HepG2 (cell line): ENCODE measurements at regions of chr16 and their contacts with region 1.

Region 1: DNA sequence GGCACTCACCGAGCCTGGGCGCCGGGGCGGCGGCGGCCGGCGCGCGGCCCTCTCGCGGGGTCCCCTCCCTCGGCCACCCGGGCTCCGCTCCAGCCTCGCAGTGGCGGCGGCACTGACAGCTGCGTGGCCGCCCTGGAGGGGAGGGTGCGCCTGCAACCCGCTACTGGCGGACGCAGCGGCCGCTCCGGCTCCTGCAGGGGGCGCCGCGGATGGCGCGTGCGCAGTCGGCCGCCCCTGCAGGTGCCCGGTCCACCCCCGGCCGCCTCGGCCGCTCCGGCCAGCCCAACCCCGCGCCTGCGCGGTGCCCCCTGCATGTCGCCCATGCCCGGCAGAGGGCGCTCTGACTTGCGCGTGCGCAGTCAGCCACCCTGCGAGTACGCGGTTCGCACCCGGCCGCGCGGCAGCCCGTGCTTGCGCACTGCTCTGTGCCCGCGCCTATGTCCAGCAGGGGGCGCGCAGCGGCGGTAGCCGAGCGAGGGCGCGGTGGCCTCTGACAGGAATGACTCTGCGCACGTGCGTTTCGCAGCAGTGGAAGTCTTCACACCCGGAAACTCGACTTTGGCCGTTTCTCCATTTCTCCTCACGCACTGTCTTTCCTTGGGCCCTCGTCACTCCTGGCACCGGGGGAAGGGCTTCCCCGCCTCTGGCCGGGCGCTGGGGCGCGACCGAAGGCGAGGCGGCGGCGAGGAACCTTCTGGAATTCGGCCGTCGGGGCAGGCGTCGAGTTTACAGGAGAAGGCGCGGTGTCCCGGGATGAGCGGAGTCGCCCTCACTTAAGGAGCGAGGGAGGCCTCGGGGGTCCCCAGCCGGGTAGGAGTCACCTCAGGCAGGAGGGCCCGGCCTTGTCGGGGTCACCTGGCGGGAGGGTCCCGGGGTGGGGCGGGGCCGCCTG is at the start of gene ABCA3:
- DNase-seq: peak; percentile 84
- ATAC-seq: peak; percentile 90
- H3K4me3 ChIP-seq: peak within 1 kb of the TSS; percentile 43 to 78 (median 65)
- H3K27ac ChIP-seq: no peak within 1 kb of the TSS
- H3K4me1 ChIP-seq: peaks cover 11% of the 10 kb centered on the region
- H3K27me3 ChIP-seq: peaks cover 6 to 38% of the 10 kb centered on the region in 2 experiments
- CTCF ChIP-seq: peak; percentile 98
- EP300 ChIP-seq: peak in 1 of 2 experiments; percentile 51; a peak in 1 of 4 replicates
- POLR2A ChIP-seq: no peak
- RAD21 ChIP-seq: peak; percentile 95
- total RNA-seq, gene ABCA3: 0.41 and 0.60 TPM in 2 replicates

Region 2: DNA sequence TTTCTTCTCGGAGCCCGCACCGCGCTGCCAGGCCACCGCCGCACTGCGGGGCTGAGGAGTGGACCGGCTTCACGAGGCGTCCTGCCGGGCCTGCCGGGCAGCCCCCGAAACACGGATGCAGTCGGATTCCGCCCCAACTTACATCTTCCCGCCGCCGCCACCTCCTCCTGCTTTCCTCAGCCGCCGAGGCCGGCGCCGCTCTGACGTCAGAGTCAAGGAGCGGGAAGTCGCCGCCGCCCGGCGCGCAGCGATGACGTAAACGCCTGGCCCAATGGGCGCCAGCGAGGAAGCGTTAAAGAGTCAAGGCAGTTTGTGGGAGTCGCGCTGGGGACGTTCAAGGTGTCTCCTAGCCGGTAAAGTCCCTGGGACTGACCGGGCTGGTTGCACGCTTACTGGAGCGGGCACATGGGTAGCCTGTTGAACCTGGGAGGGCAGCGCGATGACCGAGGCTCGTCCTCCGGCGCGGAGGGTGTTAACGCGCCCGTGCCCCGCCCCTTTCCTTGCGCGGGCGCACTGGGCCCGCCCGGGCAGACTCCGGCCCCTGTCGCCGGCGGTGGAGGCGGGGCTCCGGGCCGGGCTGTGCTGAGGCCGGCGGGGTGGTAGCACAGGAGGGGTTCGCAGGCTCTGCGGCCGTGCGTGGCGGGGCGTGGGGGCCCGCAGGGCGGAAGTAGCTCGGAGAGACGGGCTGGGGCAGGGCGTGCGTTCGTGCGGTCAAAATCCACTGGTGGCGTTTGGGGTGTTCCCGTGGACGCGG is 72.7 kb before region 1 on chr16 and contains the start of gene RNPS1:
- CTCF ChIA-PET with region 1: no interaction called
- POLR2A ChIA-PET with region 1: no interaction called
- in situ Hi-C with region 1: no loop called
- intact Hi-C with region 1: loop called (anchors 1 kb)
- DNase-seq: peak; percentile 88
- ATAC-seq: peak; percentile 91
- H3K4me3 ChIP-seq: peak within 1 kb of the TSS; percentile 74 to 95 (median 93)
- H3K27ac ChIP-seq: peak within 1 kb of the TSS; percentile 98
- H3K4me1 ChIP-seq: peaks cover 35% of the 10 kb centered on the region
- H3K27me3 ChIP-seq: no peaks in the 10 kb centered on the region
- CTCF ChIP-seq: peak; percentile 28; the same call in 1 of the 2 replicates
- EP300 ChIP-seq: no peak
- POLR2A ChIP-seq: peak; percentile 89 to 92
- RAD21 ChIP-seq: peak; percentile 21; the same call in 1 of the 2 replicates
- total RNA-seq, gene RNPS1: 126 and 127 TPM in 2 replicates

Region 3: GRCh38 chr16:2388875-2389433 is 48.1 kb after region 1 on chr16:
- CTCF ChIA-PET with region 1: no interaction called
- POLR2A ChIA-PET with region 1: no interaction called
- in situ Hi-C with region 1: no loop called
- intact Hi-C with region 1: loop called (anchors 5 kb)
- DNase-seq: peak; percentile 68
- ATAC-seq: peak; percentile 99
- H3K4me3 ChIP-seq: no peak overlapping the region
- H3K27ac ChIP-seq: no peak overlapping the region
- H3K4me1 ChIP-seq: peaks cover 11% of the 10 kb centered on the region
- H3K27me3 ChIP-seq: peaks cover 0 to 1% of the 10 kb centered on the region in 2 experiments; a peak in 1 of 5 replicates
- CTCF ChIP-seq: no peak
- EP300 ChIP-seq: peak in 1 of 2 experiments; percentile 77; a peak in 2 of 4 replicates
- POLR2A ChIP-seq: no peak
- RAD21 ChIP-seq: no peak

Region 4: GRCh38 chr16:2422123-2422867 is 81.5 kb after region 1 on chr16:
- CTCF ChIA-PET with region 1: interaction called, 18 read pairs
- POLR2A ChIA-PET with region 1: no interaction called
- in situ Hi-C with region 1: no loop called
- intact Hi-C with region 1: loop called (anchors 5 kb)
- DNase-seq: no peak
- ATAC-seq: peak; percentile 19; the same call in 2 of the 3 replicates
- H3K4me3 ChIP-seq: no peak overlapping the region
- H3K27ac ChIP-seq: no peak overlapping the region
- H3K4me1 ChIP-seq: peaks cover 4% of the 10 kb centered on the region; the same call in 1 of the 2 replicates
- H3K27me3 ChIP-seq: peaks cover 10 to 26% of the 10 kb centered on the region in 2 experiments
- CTCF ChIP-seq: no peak
- EP300 ChIP-seq: no peak
- POLR2A ChIP-seq: no peak
- RAD21 ChIP-seq: no peak

Region 5: GRCh38 chr16:2429034-2429770 is 88.4 kb after region 1 on chr16 and contains the start of gene CCNF:
- CTCF ChIA-PET with region 1: interaction called, 11 read pairs
- POLR2A ChIA-PET with region 1: no interaction called
- in situ Hi-C with region 1: no loop called
- intact Hi-C with region 1: loop called (anchors 5 kb)
- DNase-seq: peak; percentile 85
- ATAC-seq: peak; percentile 88
- H3K4me3 ChIP-seq: peak within 1 kb of the TSS; percentile 82 to 87 (median 87)
- H3K27ac ChIP-seq: peak within 1 kb of the TSS; percentile 36
- H3K4me1 ChIP-seq: peaks cover 28% of the 10 kb centered on the region
- H3K27me3 ChIP-seq: peaks cover 10 to 28% of the 10 kb centered on the region in 2 experiments
- CTCF ChIP-seq: peak; percentile 37
- EP300 ChIP-seq: no peak
- POLR2A ChIP-seq: peak in 1 of 2 experiments; percentile 71; a peak in 2 of 4 replicates
- RAD21 ChIP-seq: peak; percentile 38
- total RNA-seq, gene CCNF: 13.7 and 22.8 TPM in 2 replicates

Region 6: DNA sequence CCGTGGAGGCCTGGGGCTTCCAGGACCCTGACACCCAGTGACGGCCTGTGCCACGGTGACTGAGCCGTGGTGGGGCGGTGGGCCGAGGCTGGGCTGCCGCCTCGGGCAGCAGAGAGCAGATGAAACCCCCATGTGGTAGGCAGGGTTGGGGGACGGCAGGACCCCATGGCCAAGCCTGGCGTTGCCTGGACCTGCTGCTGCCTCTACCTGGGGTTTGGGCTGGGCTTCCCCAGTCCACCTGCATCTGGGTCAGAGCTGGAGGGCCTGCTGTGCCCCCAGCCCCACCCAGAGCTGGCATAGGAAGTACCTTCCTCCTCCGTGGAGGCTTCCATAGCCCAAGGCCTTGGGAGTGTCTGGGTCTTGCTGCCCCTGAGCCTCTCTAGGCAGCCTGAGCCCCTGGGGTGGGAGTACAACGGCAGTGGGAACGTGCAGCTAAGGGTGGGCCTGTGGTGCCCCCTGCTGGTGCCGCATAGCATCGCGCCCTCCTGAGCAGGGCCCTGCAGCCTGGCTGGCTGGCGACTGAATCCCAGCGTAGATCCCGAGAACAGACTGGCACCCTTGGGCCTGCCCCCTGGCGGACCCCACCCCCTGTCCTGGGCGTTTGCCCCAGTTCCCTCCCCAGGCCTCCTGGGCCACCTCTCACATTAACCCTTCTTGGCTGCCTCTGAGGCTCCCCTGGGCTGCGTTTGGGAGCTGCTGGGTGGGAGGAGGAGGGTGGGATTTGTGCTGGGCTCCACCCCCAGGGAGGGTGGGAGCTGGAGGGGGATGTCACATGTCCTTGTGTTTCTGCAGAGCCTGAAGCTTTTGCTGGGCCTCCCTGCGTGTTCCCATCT is 160.3 kb after region 1 on chr16:
- CTCF ChIA-PET with region 1: interaction called, 28 read pairs
- POLR2A ChIA-PET with region 1: no interaction called
- in situ Hi-C with region 1: no loop called
- intact Hi-C with region 1: loop called (anchors 10 kb)
- DNase-seq: peak; percentile 64
- ATAC-seq: peak; percentile 91
- H3K4me3 ChIP-seq: peak overlapping the region in 2 of 3 experiments; percentile 26 to 56; a peak in 2 of 6 replicates
- H3K27ac ChIP-seq: no peak overlapping the region
- H3K4me1 ChIP-seq: peaks cover 22% of the 10 kb centered on the region
- H3K27me3 ChIP-seq: no peaks in the 10 kb centered on the region
- CTCF ChIP-seq: peak; percentile 99
- EP300 ChIP-seq: no peak
- POLR2A ChIP-seq: no peak
- RAD21 ChIP-seq: peak; percentile 98